GM10248 (cell line): ENCODE measurements at regions of chr4 and their contacts with region 1.

Region 1: DNA sequence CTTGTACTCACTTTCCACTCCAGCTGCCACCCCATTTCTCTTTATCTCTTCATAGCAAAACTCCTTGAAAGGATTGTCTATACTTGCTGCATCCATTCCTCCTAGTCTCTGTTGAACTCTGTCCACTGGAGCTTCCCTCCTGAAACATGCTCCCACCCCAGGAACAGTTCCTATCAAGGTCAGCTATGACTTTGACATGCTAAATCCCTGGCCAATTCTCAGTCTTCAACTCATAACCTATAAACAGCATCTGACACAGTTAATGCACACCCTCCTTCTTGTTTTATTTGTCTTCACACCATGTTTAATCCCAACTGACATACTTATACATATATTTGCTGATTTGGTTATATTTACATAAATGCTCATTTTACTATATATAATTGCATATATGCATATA is 47.8 kb downstream of the SPARCL1 start:
- DNase-seq: no peak
- CTCF ChIP-seq: no peak

Region 2: GRCh38 chr4:87465739-87466366 is 15.5 kb before region 1 on chr4:
- CTCF ChIA-PET with region 1: interaction called, 10 read pairs
- POLR2A ChIA-PET with region 1: no interaction called
- DNase-seq: peak; percentile 47
- CTCF ChIP-seq: peak; percentile 40